ENCODE measurements at regions of chr6 and their contacts with region 1.

Region 1: GRCh38 chr6:32700391-32701040 is 34.1 kb upstream of the HLA-DQB1 start:
- DNase-seq: no peak
- ATAC-seq: peak; percentile 78
- H3K4me3 ChIP-seq: no peak overlapping the region
- H3K27ac ChIP-seq: no peak overlapping the region
- H3K4me1 ChIP-seq: no peaks in the 10 kb centered on the region
- H3K27me3 ChIP-seq: no peaks in the 10 kb centered on the region

Region 2: GRCh38 chr6:32432050-32432450 is 268.5 kb before region 1 on chr6:
- intact Hi-C with region 1: loop called (anchors 5 kb)
- DNase-seq: no peak
- ATAC-seq: no peak
- H3K4me3 ChIP-seq: no peak overlapping the region
- H3K27ac ChIP-seq: no peak overlapping the region
- H3K4me1 ChIP-seq: no peaks in the 10 kb centered on the region
- H3K27me3 ChIP-seq: no peaks in the 10 kb centered on the region

Measured in aorta (tissue), 5 donors.